ENCODE measurements at regions of chr5 and their contacts with region 1.

Region 1: GRCh38 chr5:56838409-56839039 is 23.2 kb downstream of the MAP3K1 start:
- DNase-seq: peak; percentile 84
- H3K4me3 ChIP-seq: peak overlapping the region in 1 of 3 experiments; percentile 62
- H3K27ac ChIP-seq: peak overlapping the region; percentile 69
- H3K4me1 ChIP-seq: peaks cover 17% of the 10 kb centered on the region
- H3K27me3 ChIP-seq: no peaks in the 10 kb centered on the region
- CTCF ChIP-seq: peak; percentile 14 to 29
- POLR2A ChIP-seq: no peak

Region 2: DNA sequence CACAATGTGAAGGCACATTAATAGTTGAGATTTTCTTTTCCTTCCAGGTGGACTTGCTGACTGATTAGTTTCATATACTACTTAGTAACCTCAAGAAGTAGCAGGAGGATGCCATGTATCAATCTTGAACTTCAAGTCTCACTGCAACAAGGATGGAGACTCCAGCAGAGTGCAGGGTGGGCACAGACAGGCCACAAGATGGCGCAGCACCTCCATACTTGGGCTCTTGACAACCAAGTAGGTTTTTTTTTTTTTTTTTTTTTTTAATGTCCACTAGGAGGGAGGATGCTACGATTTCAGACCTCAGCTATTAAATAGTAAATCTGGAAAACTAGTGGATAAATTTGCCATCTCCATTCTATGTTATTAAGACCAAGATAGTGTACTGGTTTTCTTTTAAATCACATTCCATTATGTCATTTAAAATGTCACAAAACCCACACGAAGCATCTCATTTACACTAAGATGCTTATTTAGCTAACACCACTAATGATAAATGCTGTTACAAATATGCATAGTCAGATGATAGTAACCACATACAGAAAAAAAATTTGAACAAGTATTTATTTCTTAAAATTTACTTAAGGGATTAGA is 902.3 kb before region 1 on chr5:
- CTCF ChIA-PET with region 1: interaction called, 43 read pairs
- POLR2A ChIA-PET with region 1: no interaction called
- dilution Hi-C with region 1: no loop called
- intact Hi-C with region 1: loop called (anchors 10 kb)
- DNase-seq: peak; percentile 88
- H3K4me3 ChIP-seq: no peak overlapping the region
- H3K27ac ChIP-seq: no peak overlapping the region
- H3K4me1 ChIP-seq: no peaks in the 10 kb centered on the region
- H3K27me3 ChIP-seq: no peaks in the 10 kb centered on the region
- CTCF ChIP-seq: peak; percentile 82 to 94
- POLR2A ChIP-seq: no peak

Region 3: DNA sequence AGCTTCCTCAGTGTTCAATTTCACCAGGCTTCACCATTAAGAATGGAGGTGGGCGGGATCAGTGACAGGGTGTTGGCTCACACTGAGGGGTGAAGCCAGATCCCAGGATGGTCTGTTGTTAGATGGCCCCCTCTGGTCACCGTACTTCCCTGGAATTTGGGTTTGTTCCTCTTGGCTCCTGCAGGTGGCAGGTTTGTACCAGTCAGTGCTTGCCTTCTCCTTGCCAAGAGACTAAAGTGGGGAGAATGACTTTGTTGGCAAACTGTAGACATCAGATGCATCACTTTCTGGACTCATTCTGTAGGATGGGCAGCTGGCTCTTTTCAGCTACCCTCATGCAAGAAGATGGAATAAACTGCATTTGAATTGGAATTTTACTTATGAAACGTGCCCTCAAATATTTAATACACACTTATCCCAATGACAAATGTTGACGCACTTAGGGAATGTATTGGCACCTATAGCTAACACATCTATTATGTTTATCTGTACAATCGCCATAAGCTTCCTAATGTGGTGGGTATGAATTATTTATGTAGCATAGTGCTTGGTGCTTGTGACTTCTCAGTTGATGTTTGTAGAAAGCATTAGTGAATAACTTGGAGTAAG is 574.0 kb before region 1 on chr5:
- CTCF ChIA-PET with region 1: interaction called, 277 read pairs
- POLR2A ChIA-PET with region 1: no interaction called
- dilution Hi-C with region 1: no loop called
- intact Hi-C with region 1: no loop called
- DNase-seq: no peak
- H3K4me3 ChIP-seq: no peak overlapping the region
- H3K27ac ChIP-seq: no peak overlapping the region
- H3K4me1 ChIP-seq: no peaks in the 10 kb centered on the region
- H3K27me3 ChIP-seq: no peaks in the 10 kb centered on the region
- CTCF ChIP-seq: peak; percentile 45 to 54
- POLR2A ChIP-seq: no peak

Region 4: DNA sequence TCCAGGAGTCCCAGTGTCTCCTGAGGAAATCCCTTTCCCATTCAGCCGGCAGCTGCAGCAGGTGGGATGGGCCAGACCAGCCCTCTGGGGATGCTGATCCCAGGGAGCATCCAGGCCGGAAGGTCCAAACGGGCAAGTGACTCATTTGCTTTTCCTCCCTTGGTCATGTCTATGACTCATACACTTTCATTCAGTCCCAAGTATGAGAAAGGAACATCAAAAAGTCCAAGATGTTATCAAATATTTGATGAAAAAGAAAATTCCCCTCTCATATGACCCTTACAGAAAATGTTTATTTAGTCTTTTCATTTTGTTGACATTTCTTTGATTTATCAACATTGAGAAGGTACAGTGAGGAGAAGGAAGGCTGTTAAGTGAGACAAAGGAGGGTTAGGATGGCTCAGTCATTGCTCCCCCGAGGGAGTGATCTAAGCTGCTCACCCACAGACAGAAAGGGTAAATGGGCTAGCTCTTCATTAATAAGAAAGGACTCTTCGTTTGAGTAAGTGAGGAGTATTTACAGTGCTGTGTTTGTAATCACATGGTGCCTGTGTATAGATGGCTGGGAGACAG is 487.8 kb before region 1 on chr5:
- CTCF ChIA-PET with region 1: interaction called, 10 read pairs
- POLR2A ChIA-PET with region 1: no interaction called
- dilution Hi-C with region 1: no loop called
- intact Hi-C with region 1: loop called (anchors 2 kb)
- DNase-seq: peak; percentile 98
- H3K4me3 ChIP-seq: no peak overlapping the region
- H3K27ac ChIP-seq: peak overlapping the region; percentile 92
- H3K4me1 ChIP-seq: peaks cover 28% of the 10 kb centered on the region
- H3K27me3 ChIP-seq: no peaks in the 10 kb centered on the region
- CTCF ChIP-seq: no peak
- POLR2A ChIP-seq: no peak

Region 5: DNA sequence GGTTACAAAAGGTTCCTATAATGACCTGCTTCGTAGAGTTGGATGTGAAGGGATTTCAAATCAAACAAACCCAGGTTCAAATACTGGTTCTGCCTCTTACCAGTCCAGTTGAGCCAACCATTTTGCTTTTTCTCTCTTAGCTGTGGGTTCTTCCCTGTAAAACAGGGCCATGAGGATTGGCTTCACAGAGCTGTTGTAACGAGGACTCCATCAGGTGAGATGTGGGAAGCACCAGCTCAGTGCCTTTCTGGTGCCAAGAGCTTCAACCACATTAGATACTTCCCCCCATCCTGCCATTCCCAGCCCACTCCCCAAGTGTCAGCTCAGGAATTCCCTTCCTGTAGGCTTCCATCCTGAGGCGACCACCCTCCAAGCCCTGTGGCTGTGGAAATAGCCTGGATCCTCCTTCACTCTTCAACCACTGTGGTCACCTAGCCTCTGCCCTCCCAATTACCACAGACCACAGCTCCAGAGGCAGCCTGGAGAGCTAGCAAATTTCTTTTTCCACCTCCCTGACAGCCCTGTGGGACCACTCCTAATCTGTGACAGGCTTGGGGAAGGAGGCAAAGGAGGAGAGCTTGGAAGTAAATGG is 243.1 kb before region 1 on chr5:
- CTCF ChIA-PET with region 1: no interaction called
- POLR2A ChIA-PET with region 1: no interaction called
- dilution Hi-C with region 1: no loop called
- intact Hi-C with region 1: no loop called
- DNase-seq: no peak
- H3K4me3 ChIP-seq: no peak overlapping the region
- H3K27ac ChIP-seq: no peak overlapping the region
- H3K4me1 ChIP-seq: no peaks in the 10 kb centered on the region
- H3K27me3 ChIP-seq: peaks cover 0 to 10% of the 10 kb centered on the region in 2 experiments
- CTCF ChIP-seq: no peak
- POLR2A ChIP-seq: no peak

Region 6: GRCh38 chr5:56814963-56815658 is 23.4 kb before region 1 on chr5 and contains the start of gene MAP3K1:
- CTCF ChIA-PET with region 1: interaction called, 58 read pairs
- POLR2A ChIA-PET with region 1: no interaction called
- dilution Hi-C with region 1: no loop called
- intact Hi-C with region 1: no loop called
- DNase-seq: peak; percentile 71
- H3K4me3 ChIP-seq: peak within 1 kb of the TSS; percentile 83 to 94 (median 85)
- H3K27ac ChIP-seq: peak within 1 kb of the TSS; percentile 47
- H3K4me1 ChIP-seq: peaks cover 19% of the 10 kb centered on the region
- H3K27me3 ChIP-seq: peaks cover 0 to 3% of the 10 kb centered on the region in 2 experiments
- CTCF ChIP-seq: peak in 1 of 2 donors; percentile 1
- POLR2A ChIP-seq: no peak
- total RNA-seq, gene MAP3K1: 12.5 and 14.4 TPM in 2 replicates

Region 7: DNA sequence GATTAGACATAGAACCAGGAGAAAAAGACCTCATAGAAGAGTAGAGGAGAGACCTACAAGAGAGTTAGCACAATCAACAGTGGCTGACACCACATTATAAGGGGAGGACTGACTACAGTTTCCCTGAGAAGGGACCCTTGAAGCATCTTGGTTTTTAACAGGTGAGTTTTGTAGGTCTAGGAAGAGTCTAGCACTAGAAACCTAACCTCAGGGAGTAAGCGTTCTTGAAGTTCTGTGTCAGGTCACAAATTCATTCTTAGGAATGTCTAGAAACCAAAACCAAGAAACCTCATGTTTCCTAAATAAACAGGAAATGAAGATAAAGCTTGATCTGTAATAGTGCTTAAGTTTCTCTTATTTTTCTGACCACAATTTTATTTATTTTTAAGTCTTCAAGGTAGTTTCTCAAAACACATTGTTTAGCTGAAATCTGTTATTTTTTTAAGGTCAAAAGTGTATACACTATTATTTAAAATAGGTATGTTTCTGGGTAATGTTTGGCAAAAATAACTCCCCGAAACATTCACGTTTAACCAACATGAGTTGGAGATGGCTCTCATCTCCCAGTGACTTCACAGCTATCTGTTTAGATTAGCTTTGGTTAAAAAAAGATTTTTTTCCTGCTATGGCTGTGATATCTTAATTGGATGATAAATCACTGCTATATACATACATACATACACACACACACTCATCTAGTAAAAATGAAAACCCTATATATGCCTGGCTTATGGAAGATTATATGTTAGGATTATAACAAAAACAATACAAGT is 13.9 kb after region 1 on chr5:
- CTCF ChIA-PET with region 1: interaction called, 21 read pairs
- POLR2A ChIA-PET with region 1: no interaction called
- dilution Hi-C with region 1: no loop called
- intact Hi-C with region 1: no loop called
- DNase-seq: no peak
- H3K4me3 ChIP-seq: no peak overlapping the region
- H3K27ac ChIP-seq: no peak overlapping the region
- H3K4me1 ChIP-seq: peaks cover 23% of the 10 kb centered on the region
- H3K27me3 ChIP-seq: no peaks in the 10 kb centered on the region
- CTCF ChIP-seq: no peak
- POLR2A ChIP-seq: no peak

Measured in endothelial cell of umbilical vein (primary cell).